Endothelial cell of umbilical vein (primary cell): ENCODE measurements at regions of chr19 and their contacts with region 1.

Region 1: DNA sequence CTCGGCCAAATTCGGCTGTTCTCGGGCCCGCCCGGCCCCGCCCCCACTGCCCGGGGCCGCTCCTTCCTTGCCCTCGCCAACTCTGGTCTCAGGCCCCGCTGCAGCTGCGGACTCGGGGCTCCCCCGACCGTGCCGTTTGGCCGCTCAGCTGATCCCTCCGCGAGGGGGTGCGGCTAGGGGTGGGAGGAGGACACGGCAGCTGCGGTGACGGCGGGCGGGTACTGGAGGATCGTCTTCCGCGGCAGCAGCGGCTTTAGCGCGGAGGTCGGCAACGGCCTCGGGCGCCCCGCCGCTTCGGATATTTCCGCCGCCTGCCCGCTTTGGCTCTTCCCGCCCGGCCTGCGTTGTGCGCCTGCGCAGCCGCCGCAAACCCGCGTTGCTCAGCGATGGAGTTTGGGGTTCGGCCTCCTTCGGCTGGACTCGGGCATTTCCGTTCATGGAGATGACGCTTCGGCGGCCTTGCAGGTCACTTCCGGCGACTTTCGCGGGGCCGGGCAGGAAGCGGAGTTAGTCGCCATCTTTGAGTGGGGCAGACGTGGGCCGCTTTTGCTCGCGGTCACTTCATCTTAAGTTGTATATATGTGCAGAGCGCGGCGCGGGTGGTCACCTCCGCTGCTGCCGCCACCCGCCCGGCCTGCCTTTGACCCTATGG is 338 bp upstream of the UBE2M start:
- DNase-seq: peak; percentile 99
- H3K4me3 ChIP-seq: peak overlapping the region; percentile 20 to 63 (median 57)
- H3K27ac ChIP-seq: peak overlapping the region; percentile 83
- H3K4me1 ChIP-seq: peaks cover 47% of the 10 kb centered on the region
- H3K27me3 ChIP-seq: peaks cover 9 to 19% of the 10 kb centered on the region in 2 experiments
- CTCF ChIP-seq: no peak
- POLR2A ChIP-seq: no peak

Region 2: GRCh38 chr19:58170860-58171259 is 387.9 kb before region 1 on chr19:
- CTCF ChIA-PET with region 1: no interaction called
- POLR2A ChIA-PET with region 1: no interaction called
- dilution Hi-C with region 1: no loop called
- intact Hi-C with region 1: no loop called
- DNase-seq: no peak
- H3K4me3 ChIP-seq: no peak overlapping the region
- H3K27ac ChIP-seq: no peak overlapping the region
- H3K4me1 ChIP-seq: no peaks in the 10 kb centered on the region
- H3K27me3 ChIP-seq: no peaks in the 10 kb centered on the region
- CTCF ChIP-seq: no peak
- POLR2A ChIP-seq: no peak

Region 3: DNA sequence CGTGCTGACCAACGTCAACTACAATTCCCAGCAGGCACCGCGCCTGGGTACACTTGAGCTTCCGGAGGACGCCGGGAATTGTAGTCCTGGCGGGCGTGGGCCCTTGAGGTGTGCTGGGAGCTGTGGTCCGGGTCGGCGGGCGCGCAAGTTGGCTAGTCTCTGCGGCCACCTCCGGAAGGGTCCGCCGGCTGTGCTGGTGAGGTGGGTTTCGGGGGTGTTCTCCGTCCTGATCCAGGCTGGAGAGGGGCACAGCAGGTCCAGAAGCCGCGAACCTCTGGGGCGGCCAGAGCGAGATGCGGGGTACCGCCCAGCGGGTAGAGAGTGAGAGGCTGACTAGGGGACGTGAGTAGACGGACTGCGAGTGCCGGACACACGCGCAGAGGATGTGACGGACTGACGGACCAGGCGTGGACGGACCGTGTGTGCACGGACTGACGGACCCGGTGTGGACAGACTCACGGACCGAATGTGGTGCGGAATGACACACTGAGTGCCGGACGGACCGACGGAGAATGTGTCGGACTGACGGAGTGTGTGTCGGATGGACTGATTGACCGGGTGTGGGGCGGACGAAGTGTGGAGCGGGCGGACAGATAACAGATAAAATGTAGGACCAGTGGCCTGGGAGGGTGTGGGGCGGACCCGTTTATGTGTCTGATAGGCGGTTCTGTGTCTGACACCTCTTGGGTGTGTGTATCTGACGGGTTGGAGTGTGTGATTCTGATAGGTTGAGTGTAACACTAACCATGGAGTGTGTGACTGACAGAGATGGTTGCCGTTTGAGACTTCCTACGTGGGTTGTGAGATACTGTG is 231.6 kb before region 1 on chr19 and contains the start of gene ZSCAN22:
- CTCF ChIA-PET with region 1: no interaction called
- POLR2A ChIA-PET with region 1: no interaction called
- dilution Hi-C with region 1: no loop called
- intact Hi-C with region 1: no loop called
- DNase-seq: peak; percentile 96
- H3K4me3 ChIP-seq: peak within 1 kb of the TSS; percentile 3 to 63 (median 56)
- H3K27ac ChIP-seq: peak within 1 kb of the TSS; percentile 1
- H3K4me1 ChIP-seq: peaks cover 12% of the 10 kb centered on the region
- H3K27me3 ChIP-seq: no peaks in the 10 kb centered on the region
- CTCF ChIP-seq: no peak
- POLR2A ChIP-seq: peak; percentile 76
- total RNA-seq, gene ZSCAN22: 3.6 and 3.7 TPM in 2 replicates

Region 4: DNA sequence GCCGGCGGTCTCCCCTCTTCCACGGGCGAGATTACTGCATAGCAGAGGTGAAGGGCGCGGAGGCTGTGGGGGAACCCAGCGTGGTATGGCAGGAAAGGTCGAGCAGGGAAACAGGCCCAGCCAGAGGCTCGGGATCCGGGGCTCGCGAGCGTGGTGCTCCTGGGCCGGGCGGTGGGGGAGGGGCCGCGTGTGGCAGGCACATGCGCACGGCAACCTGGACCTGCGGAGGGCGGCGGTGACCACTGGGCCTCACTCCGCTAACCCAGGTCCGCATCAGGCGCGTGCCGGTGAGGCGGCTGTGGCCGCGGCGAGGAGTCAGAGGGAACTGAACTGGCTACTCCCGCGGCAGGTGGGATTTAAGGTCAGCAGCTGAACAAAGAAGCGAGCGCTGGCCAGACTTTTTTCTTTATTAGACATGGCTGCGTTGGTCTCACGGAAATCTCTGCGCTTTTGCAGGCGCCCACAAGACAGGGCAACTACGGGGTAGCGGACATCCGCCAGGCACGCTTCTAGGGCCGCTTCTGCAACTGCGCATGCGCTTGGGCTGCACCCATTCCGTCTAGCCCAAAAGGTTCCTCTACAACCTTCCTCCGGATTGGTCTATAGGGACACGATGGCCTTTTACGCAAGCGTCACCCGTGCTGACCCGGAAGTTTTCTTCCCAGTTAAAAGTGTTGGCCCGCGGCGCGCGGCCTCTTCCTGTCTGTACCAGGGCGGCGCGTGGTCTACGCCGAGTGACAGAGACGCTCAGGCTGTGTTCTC is 172.0 kb before region 1 on chr19 and contains the start of gene RPS5:
- CTCF ChIA-PET with region 1: no interaction called
- POLR2A ChIA-PET with region 1: no interaction called
- dilution Hi-C with region 1: no loop called
- intact Hi-C with region 1: loop called (anchors 1 kb)
- DNase-seq: peak; percentile 98
- H3K4me3 ChIP-seq: peak within 1 kb of the TSS; percentile 67 to 93 (median 75)
- H3K27ac ChIP-seq: peak within 1 kb of the TSS; percentile 88
- H3K4me1 ChIP-seq: peaks cover 17% of the 10 kb centered on the region
- H3K27me3 ChIP-seq: no peaks in the 10 kb centered on the region
- CTCF ChIP-seq: no peak
- POLR2A ChIP-seq: peak; percentile 97
- total RNA-seq, gene RPS5: 945 and 993 TPM in 2 replicates

Region 5: DNA sequence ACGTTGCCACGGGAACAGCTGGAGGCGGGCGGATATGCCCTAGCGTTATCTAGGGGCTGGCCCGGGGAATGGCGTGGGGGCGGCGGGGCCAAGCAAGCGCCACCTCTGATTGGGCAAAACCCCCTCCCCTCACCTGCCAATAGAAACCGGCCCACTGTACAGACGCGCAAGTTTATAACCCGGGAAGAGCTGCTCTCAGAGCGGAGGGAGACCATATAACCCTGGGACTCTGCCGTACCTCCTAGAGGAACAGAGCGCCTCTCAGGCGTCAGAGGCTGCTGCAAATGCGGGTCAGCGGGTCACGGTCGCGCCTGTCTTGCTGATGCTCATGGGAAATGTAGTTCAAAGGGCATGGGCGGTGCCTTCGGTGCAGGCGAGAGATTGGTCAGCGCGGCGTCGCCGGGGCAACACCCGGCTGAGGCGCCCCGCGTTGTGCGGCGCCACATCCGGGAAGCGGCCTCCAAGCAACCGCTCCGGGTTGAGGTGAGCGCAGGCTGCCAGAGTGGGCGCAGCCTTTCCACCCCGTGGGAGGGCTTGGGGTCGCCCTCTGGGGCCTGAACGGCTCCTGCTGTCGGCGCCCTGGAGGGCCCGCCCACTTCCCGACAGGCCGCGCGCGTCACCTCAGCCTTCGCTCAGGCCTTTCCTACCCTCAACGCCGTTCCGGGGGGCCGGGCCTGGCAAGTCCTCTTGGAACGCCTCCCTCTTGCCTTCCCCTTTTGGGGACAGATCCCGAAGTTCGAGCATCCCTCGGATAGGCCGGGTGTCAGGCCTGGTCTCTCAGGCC is 82.8 kb before region 1 on chr19 and contains the start of gene ZNF446:
- CTCF ChIA-PET with region 1: no interaction called
- POLR2A ChIA-PET with region 1: no interaction called
- dilution Hi-C with region 1: no loop called
- intact Hi-C with region 1: no loop called
- DNase-seq: peak; percentile 97
- H3K4me3 ChIP-seq: peak within 1 kb of the TSS; percentile 49 to 70 (median 56)
- H3K27ac ChIP-seq: peak within 1 kb of the TSS; percentile 73
- H3K4me1 ChIP-seq: peaks cover 9% of the 10 kb centered on the region
- H3K27me3 ChIP-seq: no peaks in the 10 kb centered on the region
- CTCF ChIP-seq: no peak
- POLR2A ChIP-seq: peak; percentile 70
- total RNA-seq, gene ZNF446: 6.6 and 7.0 TPM in 2 replicates

Region 6: GRCh38 chr19:58513694-58514563 is 44.8 kb before region 1 on chr19:
- CTCF ChIA-PET with region 1: interaction called, 60 read pairs
- POLR2A ChIA-PET with region 1: interaction called, 4 read pairs
- dilution Hi-C with region 1: no loop called
- intact Hi-C with region 1: loop called (anchors 1 kb)
- DNase-seq: peak; percentile 89
- H3K4me3 ChIP-seq: peak overlapping the region in 2 of 3 experiments; percentile 8 to 27
- H3K27ac ChIP-seq: no peak overlapping the region
- H3K4me1 ChIP-seq: peaks cover 12% of the 10 kb centered on the region
- H3K27me3 ChIP-seq: no peaks in the 10 kb centered on the region
- CTCF ChIP-seq: peak; percentile 89 to 96
- POLR2A ChIP-seq: peak; percentile 92

Region 7: DNA sequence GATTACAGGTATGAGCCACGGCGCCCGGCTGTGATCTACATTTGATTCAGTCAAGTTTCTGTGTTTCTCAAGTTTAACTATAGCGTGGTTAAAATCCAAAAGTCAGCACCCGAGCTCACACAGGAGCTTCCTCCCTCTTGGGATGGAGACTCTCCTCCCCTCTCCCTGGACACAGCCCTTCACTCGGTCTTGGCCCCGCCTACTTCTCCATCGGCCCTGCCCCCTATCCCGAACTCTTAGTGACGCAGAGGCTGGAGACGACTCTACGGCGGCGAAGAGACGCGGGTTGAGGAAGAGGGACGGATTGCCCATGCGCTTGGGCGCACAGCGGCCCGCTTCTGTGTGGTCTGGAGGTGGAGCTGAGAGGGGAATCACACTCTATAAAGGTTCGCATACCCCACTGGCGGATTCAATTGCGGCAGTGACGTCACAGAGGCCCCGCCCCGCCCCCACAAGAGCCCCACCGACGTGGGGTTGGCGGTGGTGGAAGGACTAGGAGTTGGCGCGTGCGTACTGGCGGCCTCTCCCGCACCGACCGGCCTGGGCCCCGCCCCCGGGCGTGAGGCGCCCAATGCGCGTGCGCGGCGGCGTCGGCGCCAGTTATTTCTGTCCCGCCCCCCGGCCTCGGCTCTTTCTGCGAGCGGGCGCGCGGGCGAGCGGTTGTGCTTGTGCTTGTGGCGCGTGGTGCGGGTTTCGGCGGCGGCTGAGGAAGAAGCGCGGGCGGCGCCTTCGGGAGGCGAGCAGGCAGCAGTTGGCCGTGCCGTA is 14.7 kb before region 1 on chr19 and contains the start of gene TRIM28:
- CTCF ChIA-PET with region 1: interaction called, 9 read pairs
- POLR2A ChIA-PET with region 1: interaction called, 17 read pairs
- dilution Hi-C with region 1: no loop called
- intact Hi-C with region 1: loop called (anchors 1 kb)
- DNase-seq: peak; percentile 99
- H3K4me3 ChIP-seq: peak within 1 kb of the TSS; percentile 82 to 94 (median 85)
- H3K27ac ChIP-seq: peak within 1 kb of the TSS; percentile 87
- H3K4me1 ChIP-seq: peaks cover 15% of the 10 kb centered on the region
- H3K27me3 ChIP-seq: peaks cover 8 to 10% of the 10 kb centered on the region in 2 experiments
- CTCF ChIP-seq: no peak
- POLR2A ChIP-seq: peak; percentile 83
- total RNA-seq, gene TRIM28: 377 and 429 TPM in 2 replicates

Region 8: DNA sequence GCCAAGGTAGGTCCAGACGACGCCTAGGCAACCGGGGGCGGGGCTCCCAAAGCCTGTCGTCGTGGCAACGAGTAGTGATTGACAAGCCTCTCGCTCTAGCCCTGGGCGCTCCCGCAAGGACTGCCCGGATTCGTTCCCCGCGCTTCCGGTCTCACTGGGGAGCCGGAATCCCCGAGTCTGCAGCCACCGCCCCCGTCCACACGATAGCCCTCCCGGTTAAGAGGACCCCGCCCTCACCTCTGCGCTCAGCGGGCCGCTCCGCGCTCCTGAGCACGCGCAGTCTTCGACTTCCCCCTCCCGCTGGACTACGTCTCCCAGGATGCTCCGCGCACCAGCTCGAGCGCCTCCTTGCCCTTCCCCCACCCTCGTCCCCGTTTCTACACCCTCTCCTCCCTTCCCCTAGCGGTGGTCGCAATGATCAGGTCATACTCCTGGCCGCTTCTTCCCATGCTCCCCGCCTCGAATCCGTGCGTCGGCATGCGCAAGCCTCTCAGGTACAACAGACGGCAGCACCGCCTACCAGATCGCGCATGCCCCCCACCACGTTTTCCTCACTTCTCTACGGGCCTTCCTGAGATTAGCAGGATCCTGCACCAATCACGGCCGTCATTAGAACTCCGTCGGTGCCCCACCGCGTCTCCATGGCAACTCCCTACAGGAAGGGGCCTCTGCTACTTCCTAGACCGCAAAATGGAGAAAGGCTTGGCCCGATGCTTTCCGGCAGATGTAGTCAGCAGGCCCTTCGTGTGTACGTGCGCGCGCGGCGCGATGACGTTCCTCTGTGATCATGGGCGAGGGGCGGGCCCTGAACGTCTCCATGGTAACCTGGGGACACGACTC is 14.3 kb after region 1 on chr19 and contains the start of gene MZF1:
- CTCF ChIA-PET with region 1: interaction called, 3 read pairs
- POLR2A ChIA-PET with region 1: interaction called, 4 read pairs
- dilution Hi-C with region 1: no loop called
- intact Hi-C with region 1: loop called (anchors 1 kb)
- DNase-seq: peak; percentile 100
- H3K4me3 ChIP-seq: peak within 1 kb of the TSS; percentile 7 to 70 (median 58)
- H3K27ac ChIP-seq: peak within 1 kb of the TSS; percentile 85
- H3K4me1 ChIP-seq: peaks cover 16% of the 10 kb centered on the region
- H3K27me3 ChIP-seq: no peaks in the 10 kb centered on the region
- CTCF ChIP-seq: peak; percentile 6 to 23
- POLR2A ChIP-seq: no peak
- total RNA-seq, gene MZF1: 18.8 and 26.4 TPM in 2 replicates

Region 9: DNA sequence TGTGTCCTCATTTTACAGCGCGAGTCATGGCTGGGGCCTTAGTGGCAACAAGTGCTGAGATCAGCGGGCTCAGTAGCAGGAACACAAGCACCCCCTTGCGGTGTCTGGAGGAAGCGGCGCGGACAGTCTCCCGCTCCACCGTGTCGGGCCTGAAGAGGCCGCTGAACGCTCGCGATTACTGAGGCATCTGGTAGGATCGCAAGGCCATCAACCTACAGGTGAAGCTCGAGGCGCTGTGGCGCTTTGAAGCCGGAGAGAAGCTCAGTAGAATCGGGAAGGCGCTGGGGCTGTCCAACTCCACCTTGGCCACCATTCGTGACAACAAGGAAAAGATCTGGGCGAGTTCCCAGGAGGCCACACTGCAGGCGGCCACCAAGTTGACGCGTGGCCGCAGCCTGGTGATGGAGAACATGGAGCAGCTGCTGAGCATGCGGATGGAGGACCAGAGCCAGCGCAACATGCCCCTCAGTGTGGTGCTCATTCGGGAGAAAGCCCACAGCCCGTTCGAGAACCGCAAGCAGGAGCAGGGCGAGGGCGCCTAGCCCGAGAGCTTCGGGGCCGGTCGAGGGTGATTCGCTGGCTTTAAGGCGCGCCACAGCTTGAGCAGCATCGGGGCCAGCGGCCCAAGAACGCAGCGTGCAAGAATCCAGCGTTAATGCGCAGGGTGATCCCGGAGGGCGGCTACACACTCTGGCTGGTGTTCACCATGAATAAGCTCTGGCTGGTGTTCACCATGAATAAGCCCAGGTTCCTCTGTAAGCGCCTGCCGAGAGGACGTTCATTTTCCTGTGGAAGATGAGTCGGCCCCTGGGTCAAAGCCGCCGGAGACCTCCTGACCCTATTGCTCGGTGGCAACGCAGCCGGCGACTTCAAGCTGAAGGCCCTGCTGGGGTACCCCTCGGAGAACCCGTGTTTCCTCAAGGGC is 22.7 kb after region 1 on chr19:
- CTCF ChIA-PET with region 1: interaction called, 13 read pairs
- POLR2A ChIA-PET with region 1: no interaction called
- dilution Hi-C with region 1: no loop called
- intact Hi-C with region 1: no loop called
- DNase-seq: peak; percentile 91
- H3K4me3 ChIP-seq: no peak overlapping the region
- H3K27ac ChIP-seq: no peak overlapping the region
- H3K4me1 ChIP-seq: peaks cover 3% of the 10 kb centered on the region
- H3K27me3 ChIP-seq: no peaks in the 10 kb centered on the region
- CTCF ChIP-seq: peak; percentile 99 to 100
- POLR2A ChIP-seq: no peak